ENCODE measurements at regions of chr16 and their contacts with region 1.

Region 1: DNA sequence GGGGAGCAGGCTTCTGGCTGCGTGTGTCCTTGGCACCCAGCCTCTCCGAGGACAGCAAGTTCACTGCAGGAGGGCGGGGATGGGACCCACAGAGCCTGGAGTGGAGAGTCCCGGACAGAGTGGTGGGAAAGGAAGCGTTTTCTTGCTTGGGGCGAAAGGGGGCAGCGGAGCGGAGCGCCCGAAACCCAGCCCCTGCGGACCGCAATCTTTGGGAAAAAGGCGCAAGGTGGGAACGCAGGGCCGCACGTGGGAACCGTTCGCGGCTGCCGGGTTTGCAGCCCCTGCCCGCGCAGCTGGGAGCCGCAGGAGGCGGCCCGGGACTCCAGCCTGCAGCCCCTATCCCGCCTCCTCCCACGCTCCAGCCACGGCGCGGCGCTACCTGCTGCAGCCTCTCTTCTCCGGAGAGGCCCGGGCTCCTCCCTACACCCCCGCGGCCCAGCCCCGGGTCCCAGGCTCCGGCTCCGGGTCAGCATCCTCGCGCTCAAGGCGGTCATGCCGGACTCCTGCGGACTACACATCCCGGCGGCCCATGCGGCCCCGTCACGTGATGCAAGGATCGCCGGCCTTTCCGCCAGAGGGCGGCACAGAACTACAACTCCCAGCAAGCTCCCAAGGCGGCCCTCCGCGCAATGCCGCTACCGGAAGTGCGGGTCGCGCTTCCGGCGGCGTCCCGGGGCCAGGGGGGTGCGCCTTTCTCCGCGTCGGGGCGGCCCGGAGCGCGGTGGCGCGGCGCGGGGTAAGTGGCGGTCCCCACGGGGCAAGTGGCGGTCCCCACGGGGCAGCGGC is at the starts of genes NTHL1 and TSC2:
- DNase-seq: peak; percentile 95
- H3K4me3 Mint-ChIP-seq: peak within 1 kb of the TSS; percentile 93
- H3K27ac Mint-ChIP-seq: peak within 1 kb of the TSS; percentile 61
- H3K4me1 Mint-ChIP-seq: peaks cover 16% of the 10 kb centered on the region
- H3K27me3 Mint-ChIP-seq: no peaks in the 10 kb centered on the region
- total RNA-seq, gene NTHL1: 20.1 to 24.1 TPM
- total RNA-seq, gene TSC2: 72.3 to 72.7 TPM

Region 2: GRCh38 chr16:2023098-2023925 is 24.2 kb before region 1 on chr16:
- CTCF ChIA-PET with region 1: no interaction called
- intact Hi-C with region 1: loop called (anchors 2 kb)
- DNase-seq: peak; percentile 97
- H3K4me3 Mint-ChIP-seq: peak overlapping the region; percentile 49
- H3K27ac Mint-ChIP-seq: no peak overlapping the region
- H3K4me1 Mint-ChIP-seq: peaks cover 22% of the 10 kb centered on the region
- H3K27me3 Mint-ChIP-seq: peaks cover 29% of the 10 kb centered on the region

Region 3: GRCh38 chr16:2058872-2059271 is 11.3 kb after region 1 on chr16:
- CTCF ChIA-PET with region 1: no interaction called
- intact Hi-C with region 1: no loop called
- DNase-seq: no peak
- H3K4me3 Mint-ChIP-seq: no peak overlapping the region
- H3K27ac Mint-ChIP-seq: no peak overlapping the region
- H3K4me1 Mint-ChIP-seq: no peaks in the 10 kb centered on the region
- H3K27me3 Mint-ChIP-seq: no peaks in the 10 kb centered on the region

Measured in activated naive CD4-positive, alpha-beta T cell treated with anti-CD3 and anti-CD28 coated beads for 36 hours (primary cell).